ENCODE measurements at regions of chr6 and their contacts with region 1.

Region 1: GRCh38 chr6:36623547-36624459 is 29.6 kb downstream of the SRSF3 start:
- DNase-seq: peak; percentile 78

Region 2: GRCh38 chr6:36724514-36725390 is 100.9 kb after region 1 on chr6:
- in situ Hi-C with region 1: loop called (anchors 25 kb)
- DNase-seq: peak; percentile 67